ENCODE measurements at regions of chr6 and their contacts with region 1.

Region 1: GRCh38 chr6:89977808-89978748 is 83.8 kb downstream of the GJA10 start:
- DNase-seq: no peak
- ATAC-seq: no peak
- H3K4me3 Mint-ChIP-seq: no peak overlapping the region
- H3K27ac Mint-ChIP-seq: no peak overlapping the region
- H3K4me1 Mint-ChIP-seq: peaks cover 51% of the 10 kb centered on the region
- H3K27me3 Mint-ChIP-seq: no peaks in the 10 kb centered on the region
- CTCF ChIP-seq: no peak

Region 2: GRCh38 chr6:89966228-89966544 is 11.9 kb before region 1 on chr6:
- CTCF ChIA-PET with region 1: interaction called, 4 read pairs
- POLR2A ChIA-PET with region 1: interaction called, 10 read pairs
- intact Hi-C with region 1: no loop called
- DNase-seq: no peak
- ATAC-seq: peak; percentile 11
- H3K4me3 Mint-ChIP-seq: no peak overlapping the region
- H3K27ac Mint-ChIP-seq: peak overlapping the region; percentile 74
- H3K4me1 Mint-ChIP-seq: peaks cover 72% of the 10 kb centered on the region
- H3K27me3 Mint-ChIP-seq: no peaks in the 10 kb centered on the region
- CTCF ChIP-seq: no peak

Region 3: DNA sequence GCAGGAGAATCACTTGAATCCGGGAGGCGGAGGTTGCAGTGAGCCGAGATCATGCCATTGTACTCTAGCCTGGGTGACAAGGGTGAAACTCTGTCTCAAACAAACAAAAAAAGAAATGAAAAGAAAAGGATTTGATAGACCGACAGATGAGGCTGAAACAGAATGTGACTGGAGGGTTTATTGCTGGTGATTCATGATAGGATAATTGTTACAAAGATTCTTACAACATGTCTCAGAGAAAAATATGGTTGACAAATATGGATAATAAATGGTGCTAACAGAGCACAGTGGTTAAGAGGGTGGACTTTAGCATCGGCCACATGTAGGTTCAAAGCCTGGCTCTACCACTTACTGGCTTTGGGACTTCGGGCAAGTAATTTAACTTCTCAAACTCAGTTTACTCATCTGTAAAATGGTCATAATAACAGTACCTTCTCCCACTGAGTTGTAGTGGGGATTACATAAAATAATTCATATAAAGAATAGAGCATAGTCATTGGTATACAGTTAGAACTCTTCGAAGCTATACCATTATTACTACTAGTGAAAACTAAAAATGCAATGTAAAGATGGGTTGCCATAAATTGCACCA is 476.9 kb after region 1 on chr6:
- CTCF ChIA-PET with region 1: no interaction called
- POLR2A ChIA-PET with region 1: no interaction called
- intact Hi-C with region 1: no loop called
- DNase-seq: no peak
- ATAC-seq: no peak
- H3K4me3 Mint-ChIP-seq: no peak overlapping the region
- H3K27ac Mint-ChIP-seq: no peak overlapping the region
- H3K4me1 Mint-ChIP-seq: peaks cover 42% of the 10 kb centered on the region
- H3K27me3 Mint-ChIP-seq: no peaks in the 10 kb centered on the region
- CTCF ChIP-seq: no peak